Lower leg skin (tissue), 4 donors: ENCODE measurements at regions of chr19 and their contacts with region 1.

Region 1: GRCh38 chr19:5585461-5586299 is 17.9 kb upstream of the TINCR start:
- DNase-seq: peak in 1 of 2 donors; percentile 31
- H3K4me3 ChIP-seq: no peak overlapping the region
- CTCF ChIP-seq: no peak
- POLR2A ChIP-seq: no peak

Region 2: GRCh38 chr19:5369962-5370367 is 215.7 kb before region 1 on chr19:
- intact Hi-C with region 1: loop called (anchors 10 kb)
- DNase-seq: peak in 1 of 2 donors; percentile 86
- H3K4me3 ChIP-seq: no peak overlapping the region
- CTCF ChIP-seq: no peak
- POLR2A ChIP-seq: no peak

Region 3: GRCh38 chr19:5665796-5666513 is 80.3 kb after region 1 on chr19:
- intact Hi-C with region 1: no loop called
- DNase-seq: no peak
- H3K4me3 ChIP-seq: no peak overlapping the region
- CTCF ChIP-seq: no peak
- POLR2A ChIP-seq: no peak